Activated CD4-positive, alpha-beta T cell treated with anti-CD3 and anti-CD28 coated beads, Interleukin-2, amount 10 ng/mL, durations not matched to agents 24 days and 14 days (primary cell): ENCODE measurements at regions of chr9 and their contacts with region 1.

Region 1: DNA sequence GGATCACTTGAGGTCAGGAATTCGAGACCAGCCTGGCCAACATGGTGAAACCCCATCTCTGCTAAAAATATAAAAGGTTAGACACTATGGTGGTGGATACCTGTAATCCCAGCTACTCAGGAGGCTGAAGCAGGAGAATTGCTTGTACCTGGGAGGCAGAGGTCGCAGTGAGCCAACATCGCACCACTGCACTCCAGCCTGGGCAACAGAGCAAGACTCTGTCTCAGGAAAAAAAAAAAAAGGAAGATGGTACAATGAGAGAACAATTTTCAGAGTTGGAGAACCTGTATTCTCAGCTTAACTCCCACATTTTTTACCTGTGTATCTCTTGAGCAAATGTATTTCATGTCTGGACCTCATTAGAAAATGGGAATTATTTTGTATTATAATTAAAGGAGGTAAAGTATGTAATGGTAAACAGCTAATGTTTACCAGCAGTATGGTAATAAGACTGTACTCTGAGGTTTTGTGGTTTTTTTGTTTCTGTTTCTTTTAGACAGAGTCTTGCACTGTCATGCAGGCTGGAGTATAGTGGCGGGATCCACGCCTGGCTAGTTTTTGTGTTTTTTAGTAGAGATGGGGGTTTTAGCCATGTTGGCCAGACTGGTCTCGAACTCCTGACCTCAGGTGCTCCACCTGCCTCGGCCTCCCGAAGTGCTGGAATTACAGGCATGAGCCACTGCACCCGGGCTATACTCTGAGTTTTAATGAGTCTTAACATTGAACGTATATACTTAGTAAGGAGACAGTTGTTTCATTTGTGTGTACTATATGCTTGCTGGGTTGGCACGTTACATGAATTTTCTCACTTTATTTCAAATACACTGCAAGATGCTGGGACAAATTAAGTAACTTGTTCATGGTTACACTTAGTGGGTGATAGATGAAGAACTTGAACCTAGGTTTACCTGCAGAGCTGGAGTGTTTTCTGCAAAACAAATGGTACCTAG is 16.2 kb downstream of the UHRF2 start:
- DNase-seq: peak; percentile 80
- H3K4me3 Mint-ChIP-seq: peak overlapping the region; percentile 40
- H3K27ac Mint-ChIP-seq: peak overlapping the region; percentile 72
- H3K4me1 Mint-ChIP-seq: peaks cover 59% of the 10 kb centered on the region
- H3K27me3 Mint-ChIP-seq: no peaks in the 10 kb centered on the region

Region 2: DNA sequence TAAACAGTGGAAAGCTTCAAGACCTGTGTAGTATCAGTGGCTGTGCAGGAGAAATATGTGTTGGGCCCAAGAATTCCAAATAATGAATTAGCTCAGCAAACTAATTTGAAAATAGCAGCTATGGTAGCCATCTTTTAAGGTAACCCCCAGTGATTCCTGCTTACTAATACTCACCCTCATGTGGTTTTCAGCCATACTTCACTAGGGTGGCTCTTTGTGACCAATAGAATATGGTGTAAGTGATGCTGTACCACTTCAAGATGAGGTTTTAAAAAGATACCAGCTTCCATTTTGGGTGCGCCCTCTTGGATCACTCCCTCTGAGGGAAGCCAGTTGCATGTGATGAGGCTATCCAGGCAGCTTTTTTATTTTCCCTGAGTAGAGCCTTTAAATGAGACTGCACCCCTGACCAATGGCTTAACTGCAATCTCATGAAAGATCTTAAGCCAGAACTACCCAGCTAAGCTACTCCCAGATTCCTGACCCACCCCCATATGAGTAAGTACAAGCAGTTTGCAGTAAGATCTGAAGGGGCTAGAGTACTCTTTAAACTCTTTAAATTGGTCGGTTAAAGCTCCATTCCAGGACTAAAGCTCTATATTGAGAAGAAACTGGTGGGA is 42.1 kb after region 1 on chr9:
- intact Hi-C with region 1: loop called (anchors 5 kb)
- DNase-seq: no peak
- H3K4me3 Mint-ChIP-seq: no peak overlapping the region
- H3K27ac Mint-ChIP-seq: no peak overlapping the region
- H3K4me1 Mint-ChIP-seq: peaks cover 17% of the 10 kb centered on the region
- H3K27me3 Mint-ChIP-seq: no peaks in the 10 kb centered on the region